ENCODE measurements at regions of chr7 and their contacts with region 1.

Region 1: GRCh38 chr7:91034459-91035368 is 229.5 kb upstream of the FZD1 start:
- DNase-seq: peak; percentile 63
- ATAC-seq: peak; percentile 78
- H3K4me3 ChIP-seq: no peak overlapping the region
- H3K27ac ChIP-seq: no peak overlapping the region
- H3K4me1 ChIP-seq: peaks cover 3% of the 10 kb centered on the region; the same call in 1 of the 2 replicates
- H3K27me3 ChIP-seq: no peaks in the 10 kb centered on the region
- CTCF ChIP-seq: peak; percentile 74
- POLR2A ChIP-seq: no peak
- RAD21 ChIP-seq: peak; percentile 82

Region 2: GRCh38 chr7:90396420-90396819 is 638.3 kb before region 1 on chr7:
- CTCF ChIA-PET with region 1: no interaction called
- POLR2A ChIA-PET with region 1: no interaction called
- dilution Hi-C with region 1: no loop called
- in situ Hi-C with region 1: no loop called
- intact Hi-C with region 1: no loop called
- DNase-seq: no peak
- ATAC-seq: no peak
- H3K4me3 ChIP-seq: no peak overlapping the region
- H3K27ac ChIP-seq: no peak overlapping the region
- H3K4me1 ChIP-seq: no peaks in the 10 kb centered on the region
- H3K27me3 ChIP-seq: no peaks in the 10 kb centered on the region
- CTCF ChIP-seq: no peak
- POLR2A ChIP-seq: no peak
- RAD21 ChIP-seq: no peak

Region 3: GRCh38 chr7:90455163-90456030 is 579.3 kb before region 1 on chr7:
- CTCF ChIA-PET with region 1: interaction called, 11 read pairs
- POLR2A ChIA-PET with region 1: no interaction called
- dilution Hi-C with region 1: no loop called
- in situ Hi-C with region 1: loop called (anchors 10 kb)
- intact Hi-C with region 1: loop called (anchors 1 kb)
- DNase-seq: peak; percentile 57
- ATAC-seq: peak; percentile 89
- H3K4me3 ChIP-seq: peak overlapping the region; percentile 23; the same call in 1 of the 2 replicates
- H3K27ac ChIP-seq: no peak overlapping the region
- H3K4me1 ChIP-seq: no peaks in the 10 kb centered on the region
- H3K27me3 ChIP-seq: no peaks in the 10 kb centered on the region
- CTCF ChIP-seq: peak; percentile 70
- POLR2A ChIP-seq: no peak
- RAD21 ChIP-seq: peak; percentile 72

Region 4: GRCh38 chr7:90552521-90552920 is 482.2 kb before region 1 on chr7:
- CTCF ChIA-PET with region 1: interaction called, 3 read pairs
- POLR2A ChIA-PET with region 1: no interaction called
- dilution Hi-C with region 1: no loop called
- in situ Hi-C with region 1: no loop called
- intact Hi-C with region 1: loop called (anchors 1 kb)
- DNase-seq: peak; percentile 35
- ATAC-seq: 0 out of 2 replicates have a peak, but pooled peaks have one; percentile 59
- H3K4me3 ChIP-seq: no peak overlapping the region
- H3K27ac ChIP-seq: no peak overlapping the region
- H3K4me1 ChIP-seq: peaks cover 2% of the 10 kb centered on the region; the same call in 1 of the 2 replicates
- H3K27me3 ChIP-seq: peaks cover 4% of the 10 kb centered on the region; the same call in 1 of the 2 replicates
- CTCF ChIP-seq: peak; percentile 42
- POLR2A ChIP-seq: no peak
- RAD21 ChIP-seq: peak; percentile 46

Region 5: DNA sequence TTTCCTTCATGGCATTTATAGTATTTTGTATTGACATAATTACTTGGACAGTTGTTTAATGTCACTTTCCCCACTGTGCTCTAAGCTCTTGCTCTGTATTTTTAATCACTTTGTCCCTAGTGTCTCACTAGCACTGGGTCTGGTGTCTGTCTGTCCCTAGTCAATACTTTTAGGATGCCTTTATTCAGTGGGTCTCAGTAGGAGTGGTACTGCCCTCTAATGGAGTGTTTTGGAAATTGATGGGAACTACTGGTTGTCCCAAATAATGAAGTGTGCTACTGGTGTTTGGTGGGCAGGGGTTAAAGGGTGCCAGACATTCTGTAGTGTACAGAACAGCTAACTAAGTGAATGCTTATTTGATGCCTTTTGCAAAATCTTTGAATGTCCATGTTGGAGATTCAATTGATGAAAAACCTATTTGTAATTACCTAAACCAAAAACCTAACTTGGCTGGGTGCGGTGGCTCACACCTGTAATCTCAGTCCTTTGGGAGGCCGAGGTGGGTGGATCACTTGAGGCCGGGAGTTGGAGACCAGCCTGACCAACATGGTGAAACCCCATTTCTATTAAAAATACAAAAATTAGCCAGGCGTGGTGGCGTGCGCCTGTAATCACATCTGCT is 405.3 kb before region 1 on chr7:
- CTCF ChIA-PET with region 1: interaction called, 13 read pairs
- POLR2A ChIA-PET with region 1: no interaction called
- dilution Hi-C with region 1: no loop called
- in situ Hi-C with region 1: no loop called
- intact Hi-C with region 1: loop called (anchors 1 kb)
- DNase-seq: peak; percentile 63
- ATAC-seq: peak; percentile 73
- H3K4me3 ChIP-seq: no peak overlapping the region
- H3K27ac ChIP-seq: no peak overlapping the region
- H3K4me1 ChIP-seq: peaks cover 8% of the 10 kb centered on the region
- H3K27me3 ChIP-seq: no peaks in the 10 kb centered on the region
- CTCF ChIP-seq: peak; percentile 68
- POLR2A ChIP-seq: no peak
- RAD21 ChIP-seq: peak; percentile 76

Region 6: GRCh38 chr7:90690159-90690858 is 344.4 kb before region 1 on chr7:
- CTCF ChIA-PET with region 1: no interaction called
- POLR2A ChIA-PET with region 1: no interaction called
- dilution Hi-C with region 1: no loop called
- in situ Hi-C with region 1: no loop called
- intact Hi-C with region 1: loop called (anchors 5 kb)
- DNase-seq: no peak
- ATAC-seq: no peak
- H3K4me3 ChIP-seq: no peak overlapping the region
- H3K27ac ChIP-seq: no peak overlapping the region
- H3K4me1 ChIP-seq: peaks cover 7% of the 10 kb centered on the region
- H3K27me3 ChIP-seq: no peaks in the 10 kb centered on the region
- CTCF ChIP-seq: no peak
- POLR2A ChIP-seq: no peak
- RAD21 ChIP-seq: no peak

Region 7: GRCh38 chr7:90708841-90709317 is 325.8 kb before region 1 on chr7:
- CTCF ChIA-PET with region 1: interaction called, 3 read pairs
- POLR2A ChIA-PET with region 1: no interaction called
- dilution Hi-C with region 1: no loop called
- in situ Hi-C with region 1: no loop called
- intact Hi-C with region 1: loop called (anchors 5 kb)
- DNase-seq: no peak
- ATAC-seq: no peak
- H3K4me3 ChIP-seq: no peak overlapping the region
- H3K27ac ChIP-seq: no peak overlapping the region
- H3K4me1 ChIP-seq: peaks cover 12% of the 10 kb centered on the region
- H3K27me3 ChIP-seq: no peaks in the 10 kb centered on the region
- CTCF ChIP-seq: peak; percentile 37
- POLR2A ChIP-seq: no peak
- RAD21 ChIP-seq: peak; percentile 41

Region 8: GRCh38 chr7:90857603-90858002 is 177.1 kb before region 1 on chr7:
- CTCF ChIA-PET with region 1: no interaction called
- POLR2A ChIA-PET with region 1: no interaction called
- dilution Hi-C with region 1: no loop called
- in situ Hi-C with region 1: no loop called
- intact Hi-C with region 1: no loop called
- DNase-seq: no peak
- ATAC-seq: no peak
- H3K4me3 ChIP-seq: no peak overlapping the region
- H3K27ac ChIP-seq: no peak overlapping the region
- H3K4me1 ChIP-seq: peaks cover 2% of the 10 kb centered on the region; the same call in 1 of the 2 replicates
- H3K27me3 ChIP-seq: no peaks in the 10 kb centered on the region
- CTCF ChIP-seq: no peak
- POLR2A ChIP-seq: no peak
- RAD21 ChIP-seq: no peak

Region 9: DNA sequence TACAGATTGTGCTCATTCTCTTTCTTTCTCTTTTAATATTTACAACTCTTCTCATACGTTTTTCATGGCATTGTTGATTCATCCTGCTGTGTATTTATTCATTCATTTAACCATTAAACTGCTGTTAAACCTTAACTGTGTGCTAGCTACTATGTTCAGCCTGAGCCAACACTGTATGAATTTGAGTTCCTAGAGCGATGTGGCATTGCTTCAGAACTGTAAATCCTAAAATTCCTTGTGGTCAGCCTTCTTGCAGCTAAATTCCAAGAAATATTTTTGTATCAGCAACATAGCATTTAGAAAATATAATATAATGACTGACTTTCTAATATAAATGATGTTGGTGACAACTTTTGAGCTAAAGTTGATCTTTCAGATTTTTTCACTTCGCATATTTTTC is 44.8 kb after region 1 on chr7:
- CTCF ChIA-PET with region 1: no interaction called
- POLR2A ChIA-PET with region 1: no interaction called
- dilution Hi-C with region 1: no loop called
- in situ Hi-C with region 1: no loop called
- intact Hi-C with region 1: no loop called
- DNase-seq: peak; percentile 69
- ATAC-seq: peak; percentile 76
- H3K4me3 ChIP-seq: no peak overlapping the region
- H3K27ac ChIP-seq: no peak overlapping the region
- H3K4me1 ChIP-seq: 0 out of 2 replicates have a peak, but pooled peaks cover 2% of the 10 kb centered on the region
- H3K27me3 ChIP-seq: no peaks in the 10 kb centered on the region
- CTCF ChIP-seq: no peak
- POLR2A ChIP-seq: no peak
- RAD21 ChIP-seq: no peak